SK-N-SH (cell line): ENCODE measurements at regions of chr5 and their contacts with region 1.

Region 1: GRCh38 chr5:132526290-132526973 is 16.9 kb downstream of the IL5 start:
- DNase-seq: peak; percentile 70
- H3K4me3 ChIP-seq: peak overlapping the region; percentile 12 to 43; a peak in 2 of 4 replicates
- H3K27ac ChIP-seq: no peak overlapping the region
- H3K4me1 ChIP-seq: no peaks in the 10 kb centered on the region; a peak in 1 of 4 replicates
- H3K27me3 ChIP-seq: no peaks in the 10 kb centered on the region
- CTCF ChIP-seq: peak; percentile 94
- EP300 ChIP-seq: no peak
- RAD21 ChIP-seq: peak; percentile 63; the same call in 1 of the 2 replicates

Region 2: GRCh38 chr5:132410451-132411381 is 115.7 kb before region 1 on chr5:
- CTCF ChIA-PET with region 1: no interaction called
- POLR2A ChIA-PET with region 1: no interaction called
- DNase-seq: peak; percentile 95
- H3K4me3 ChIP-seq: peak overlapping the region; percentile 71 to 76
- H3K27ac ChIP-seq: peak overlapping the region; percentile 81 to 89
- H3K4me1 ChIP-seq: peaks cover 19 to 26% of the 10 kb centered on the region in 2 experiments
- H3K27me3 ChIP-seq: no peaks in the 10 kb centered on the region
- CTCF ChIP-seq: peak; percentile 62
- EP300 ChIP-seq: 0 out of 4 replicates have a peak, but pooled peaks of 1 of the 2 experiments have one; percentile 6
- RAD21 ChIP-seq: peak; percentile 52

Region 3: DNA sequence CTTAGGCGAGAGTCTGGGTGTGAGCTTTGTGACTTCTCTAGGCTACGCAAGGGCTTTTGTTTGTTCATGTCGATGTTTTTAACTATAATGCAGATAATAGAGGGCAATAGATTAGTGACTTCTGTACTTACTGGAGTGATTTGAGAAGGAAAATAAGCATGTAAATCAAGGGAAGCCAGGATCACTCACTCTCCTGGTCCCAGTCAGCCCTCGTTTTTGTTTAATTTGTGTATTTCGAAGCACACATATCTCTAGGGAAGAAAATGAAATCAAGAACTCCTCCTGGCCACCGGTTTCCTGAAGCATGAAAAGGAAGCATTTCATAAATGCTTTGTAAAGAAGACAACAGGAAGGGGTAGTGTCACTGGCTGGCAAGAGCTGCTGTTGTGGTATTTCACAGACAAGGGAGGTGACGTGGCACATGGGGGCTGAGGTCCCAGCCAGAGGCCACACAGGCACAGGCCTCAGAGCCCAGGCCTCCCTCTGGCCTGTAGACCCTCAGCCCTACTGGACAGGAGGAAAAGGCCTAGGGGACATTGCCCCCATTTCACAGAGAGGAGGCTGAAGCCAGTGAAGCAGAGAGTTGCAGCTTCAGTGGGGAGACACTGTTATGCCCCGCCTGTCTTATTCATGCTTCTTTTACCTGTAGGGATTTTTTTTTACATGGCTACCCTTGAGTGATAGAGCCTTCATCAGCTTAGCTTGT is 70.0 kb before region 1 on chr5:
- CTCF ChIA-PET with region 1: no interaction called
- POLR2A ChIA-PET with region 1: no interaction called
- DNase-seq: no peak
- H3K4me3 ChIP-seq: no peak overlapping the region
- H3K27ac ChIP-seq: peak overlapping the region; percentile 56 to 83
- H3K4me1 ChIP-seq: peaks cover 17 to 44% of the 10 kb centered on the region in 2 experiments
- H3K27me3 ChIP-seq: no peaks in the 10 kb centered on the region
- CTCF ChIP-seq: no peak
- EP300 ChIP-seq: no peak
- RAD21 ChIP-seq: no peak

Region 4: DNA sequence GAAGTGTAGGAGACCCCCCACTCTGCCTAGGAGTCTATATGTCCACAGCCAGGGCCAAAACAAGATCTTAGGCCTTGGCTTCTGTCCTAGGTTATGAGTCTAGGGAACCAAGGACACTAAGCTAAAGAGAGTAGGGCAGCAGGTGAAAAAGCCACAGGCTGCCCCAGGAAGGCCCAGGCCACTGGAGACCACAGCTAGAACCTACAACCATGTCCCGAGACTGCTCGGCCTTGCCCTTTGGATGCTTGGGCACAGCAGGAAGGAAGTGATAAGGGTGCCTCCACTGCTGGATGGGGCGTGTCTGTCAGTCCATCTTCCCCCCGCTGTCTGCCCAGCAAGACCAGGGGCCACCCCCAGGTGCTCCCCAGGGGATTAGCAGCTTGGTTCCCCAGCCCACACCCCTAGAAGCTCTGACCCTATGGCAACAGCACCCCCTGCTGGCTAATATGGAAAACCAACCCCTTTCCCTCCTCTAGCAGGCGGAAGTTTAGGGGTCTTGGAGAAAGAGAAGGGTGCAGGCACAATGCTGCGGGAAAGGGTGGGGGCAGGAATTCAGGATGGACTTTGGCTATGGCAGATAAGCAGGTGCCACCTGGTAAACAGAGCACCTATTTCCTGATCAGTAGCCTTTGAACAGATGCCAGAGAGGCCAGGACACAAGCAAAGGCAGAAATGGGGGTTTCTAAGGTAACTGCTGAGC is 25.4 kb before region 1 on chr5:
- CTCF ChIA-PET with region 1: interaction called, 22 read pairs
- POLR2A ChIA-PET with region 1: no interaction called
- DNase-seq: peak; percentile 82
- H3K4me3 ChIP-seq: peak overlapping the region in 1 of 2 experiments; percentile 20; a peak in 1 of 4 replicates
- H3K27ac ChIP-seq: no peak overlapping the region; a peak in 1 of 4 replicates
- H3K4me1 ChIP-seq: peaks cover 12 to 15% of the 10 kb centered on the region in 2 experiments; a peak in 2 of 4 replicates
- H3K27me3 ChIP-seq: no peaks in the 10 kb centered on the region
- CTCF ChIP-seq: peak; percentile 85
- EP300 ChIP-seq: no peak
- RAD21 ChIP-seq: peak; percentile 90

Region 5: DNA sequence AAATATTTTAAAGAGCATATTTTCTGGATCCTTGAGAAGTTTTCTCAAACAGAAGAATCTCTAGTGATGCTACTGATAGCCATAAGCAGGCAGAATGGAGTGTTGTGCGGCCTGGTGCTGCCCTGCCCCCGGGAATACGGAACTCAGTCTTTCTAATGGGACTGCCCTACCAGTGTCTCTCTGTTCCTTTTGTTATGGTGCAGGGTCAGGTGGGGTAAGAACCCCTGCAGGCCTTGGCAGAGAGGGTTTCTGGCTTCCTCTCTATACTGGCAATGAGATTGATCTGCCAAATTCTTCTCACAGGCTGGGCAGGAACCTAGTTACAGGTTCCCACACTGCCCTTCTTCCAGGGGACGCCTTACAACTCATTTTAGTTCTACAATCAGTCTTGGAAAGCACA is 14.3 kb after region 1 on chr5:
- CTCF ChIA-PET with region 1: interaction called, 45 read pairs
- POLR2A ChIA-PET with region 1: no interaction called
- DNase-seq: no peak
- H3K4me3 ChIP-seq: no peak overlapping the region
- H3K27ac ChIP-seq: no peak overlapping the region
- H3K4me1 ChIP-seq: peaks cover 0 to 3% of the 10 kb centered on the region in 2 experiments; a peak in 1 of 4 replicates
- H3K27me3 ChIP-seq: no peaks in the 10 kb centered on the region; the same call in 1 of the 2 replicates
- CTCF ChIP-seq: no peak
- EP300 ChIP-seq: no peak
- RAD21 ChIP-seq: no peak

Region 6: DNA sequence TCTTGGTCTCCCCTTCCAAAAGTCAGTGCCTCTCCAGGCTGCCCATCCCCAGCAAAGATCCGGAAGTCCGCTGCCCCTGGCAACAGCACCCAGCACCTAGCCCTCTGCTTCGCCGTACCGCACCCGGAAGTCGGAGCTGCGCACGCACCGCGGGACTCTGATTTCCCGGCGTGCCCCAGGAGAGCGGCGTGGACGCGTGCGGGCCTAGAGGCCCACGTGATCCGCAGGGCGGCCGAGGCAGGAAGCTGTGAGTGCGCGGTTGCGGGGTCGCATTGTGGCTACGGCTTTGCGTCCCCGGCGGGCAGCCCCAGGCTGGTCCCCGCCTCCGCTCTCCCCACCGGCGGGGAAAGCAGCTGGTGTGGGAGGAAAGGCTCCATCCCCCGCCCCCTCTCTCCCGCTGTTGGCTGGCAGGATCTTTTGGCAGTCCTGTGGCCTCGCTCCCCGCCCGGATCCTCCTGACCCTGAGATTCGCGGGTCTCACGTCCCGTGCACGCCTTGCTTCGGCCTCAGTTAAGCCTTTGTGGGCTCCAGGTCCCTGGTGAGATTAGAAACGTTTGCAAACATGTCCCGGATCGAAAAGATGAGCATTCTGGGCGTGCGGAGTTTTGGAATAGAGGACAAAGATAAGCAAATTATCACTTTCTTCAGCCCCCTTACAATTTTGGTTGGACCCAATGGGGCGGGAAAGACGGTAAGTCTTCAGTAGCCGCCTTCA is 30.5 kb after region 1 on chr5 and contains the start of gene RAD50:
- CTCF ChIA-PET with region 1: interaction called, 15 read pairs
- POLR2A ChIA-PET with region 1: no interaction called
- DNase-seq: peak; percentile 94
- H3K4me3 ChIP-seq: peak within 1 kb of the TSS; percentile 73 to 81
- H3K27ac ChIP-seq: peak within 1 kb of the TSS; percentile 92 to 98
- H3K4me1 ChIP-seq: peaks cover 0 to 4% of the 10 kb centered on the region in 2 experiments; a peak in 1 of 4 replicates
- H3K27me3 ChIP-seq: no peaks in the 10 kb centered on the region
- CTCF ChIP-seq: no peak
- EP300 ChIP-seq: peak in 1 of 2 experiments; percentile 21; a peak in 2 of 4 replicates
- RAD21 ChIP-seq: no peak
- polyA plus RNA-seq, gene RAD50: 20.0 and 25.7 TPM in 2 replicates

Region 7: GRCh38 chr5:132734687-132735086 is 208.3 kb after region 1 on chr5:
- CTCF ChIA-PET with region 1: interaction called, 11 read pairs
- POLR2A ChIA-PET with region 1: no interaction called
- DNase-seq: no peak
- H3K4me3 ChIP-seq: no peak overlapping the region
- H3K27ac ChIP-seq: no peak overlapping the region
- H3K4me1 ChIP-seq: peaks cover 3 to 6% of the 10 kb centered on the region in 2 experiments; a peak in 2 of 4 replicates
- H3K27me3 ChIP-seq: no peaks in the 10 kb centered on the region
- CTCF ChIP-seq: no peak
- EP300 ChIP-seq: no peak
- RAD21 ChIP-seq: no peak

Region 8: DNA sequence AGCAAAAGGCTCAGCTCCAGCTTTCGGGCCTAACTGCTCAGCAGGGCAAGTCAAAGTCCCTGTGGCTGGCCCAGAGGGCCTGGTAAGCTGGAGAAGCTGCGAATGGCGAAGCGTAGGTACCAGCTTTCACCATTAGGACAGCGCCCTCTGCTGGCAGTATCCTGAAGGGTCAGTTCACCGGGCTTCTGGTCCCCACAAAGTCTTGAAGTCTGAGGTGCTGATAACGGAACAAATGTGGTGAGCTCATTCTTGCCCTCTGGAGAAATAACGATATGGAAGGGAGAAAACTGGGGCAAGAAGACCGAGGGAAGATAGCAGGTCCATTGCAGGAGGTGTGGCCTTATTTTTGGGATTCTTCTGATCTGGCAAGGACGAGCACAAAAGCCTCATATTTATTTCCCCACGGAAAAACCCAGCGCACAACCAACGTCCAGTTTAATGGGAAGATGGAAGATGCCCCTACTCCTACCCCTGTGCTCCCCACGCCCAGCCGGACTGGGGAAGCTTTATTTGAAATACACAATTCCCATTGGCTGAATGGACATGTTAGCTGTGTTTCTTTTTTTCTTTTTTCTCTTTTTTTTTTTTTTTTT is 293.8 kb after region 1 on chr5:
- CTCF ChIA-PET with region 1: interaction called, 88 read pairs
- POLR2A ChIA-PET with region 1: no interaction called
- DNase-seq: peak; percentile 92
- H3K4me3 ChIP-seq: no peak overlapping the region; a peak in 1 of 4 replicates
- H3K27ac ChIP-seq: no peak overlapping the region
- H3K4me1 ChIP-seq: peaks cover 0 to 6% of the 10 kb centered on the region in 2 experiments; a peak in 1 of 4 replicates
- H3K27me3 ChIP-seq: no peaks in the 10 kb centered on the region
- CTCF ChIP-seq: peak; percentile 91
- EP300 ChIP-seq: no peak
- RAD21 ChIP-seq: peak; percentile 90

Region 9: DNA sequence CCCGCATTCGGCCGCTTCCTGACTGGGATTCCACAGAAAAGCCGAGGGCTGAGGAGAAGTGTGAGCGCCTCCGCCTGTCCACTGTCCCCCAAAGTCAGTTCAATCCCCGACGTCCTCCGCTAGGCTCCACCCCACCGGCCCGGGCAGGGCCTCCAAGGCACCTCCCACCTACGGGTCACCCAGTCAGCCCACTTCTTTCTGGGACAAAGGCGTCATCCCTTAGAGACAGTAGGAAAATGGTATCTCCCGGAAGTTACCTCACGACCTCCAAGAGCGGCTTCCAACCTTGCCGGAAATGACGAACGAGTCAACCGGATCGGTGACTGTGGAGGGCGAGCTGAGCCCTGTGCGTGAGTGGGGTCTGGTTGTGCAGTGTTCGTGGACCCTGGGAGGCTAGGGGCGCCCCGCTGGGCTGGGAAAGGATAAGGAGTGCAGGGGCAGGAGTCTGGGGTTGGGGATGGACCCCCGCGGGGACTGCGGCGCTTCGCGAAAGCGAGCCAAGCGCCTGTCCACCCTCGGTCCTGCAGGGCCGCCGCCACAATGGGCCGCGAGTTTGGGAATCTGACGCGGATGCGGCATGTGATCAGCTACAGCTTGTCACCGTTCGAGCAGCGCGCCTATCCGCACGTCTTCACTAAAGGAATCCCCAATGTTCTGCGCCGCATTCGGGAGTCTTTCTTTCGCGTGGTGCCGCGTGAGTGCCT is 340.1 kb after region 1 on chr5 and contains the starts of genes GDF9 and UQCRQ:
- CTCF ChIA-PET with region 1: interaction called, 11 read pairs
- POLR2A ChIA-PET with region 1: no interaction called
- DNase-seq: peak; percentile 96
- H3K4me3 ChIP-seq: peak within 1 kb of the TSS; percentile 78 to 99
- H3K27ac ChIP-seq: peak within 1 kb of the TSS; percentile 73 to 92
- H3K4me1 ChIP-seq: peaks cover 7 to 14% of the 10 kb centered on the region in 2 experiments; a peak in 3 of 4 replicates
- H3K27me3 ChIP-seq: no peaks in the 10 kb centered on the region
- CTCF ChIP-seq: peak; percentile 46
- EP300 ChIP-seq: peak in 1 of 2 experiments; percentile 32; a peak in 1 of 4 replicates
- RAD21 ChIP-seq: peak; percentile 62
- polyA plus RNA-seq, gene GDF9: 0.82 and 1.2 TPM in 2 replicates
- polyA plus RNA-seq, gene UQCRQ: 510 and 694 TPM in 2 replicates